A673 (cell line): ENCODE measurements at regions of chr12 and their contacts with region 1.

Region 1: GRCh38 chr12:66232263-66232662 is 43.2 kb downstream of the IRAK3 start:
- DNase-seq: no peak
- H3K4me3 ChIP-seq: no peak overlapping the region
- H3K27ac ChIP-seq: no peak overlapping the region
- H3K4me1 ChIP-seq: no peaks in the 10 kb centered on the region
- H3K27me3 ChIP-seq: no peaks in the 10 kb centered on the region
- CTCF ChIP-seq: no peak

Region 2: GRCh38 chr12:67193704-67194103 is 961.4 kb after region 1 on chr12:
- CTCF ChIA-PET with region 1: no interaction called
- POLR2A ChIA-PET with region 1: interaction called, 15 read pairs
- intact Hi-C with region 1: no loop called
- DNase-seq: peak; percentile 33
- H3K4me3 ChIP-seq: no peak overlapping the region
- H3K27ac ChIP-seq: no peak overlapping the region
- H3K4me1 ChIP-seq: no peaks in the 10 kb centered on the region
- H3K27me3 ChIP-seq: peaks cover 43% of the 10 kb centered on the region
- CTCF ChIP-seq: no peak